Heart right ventricle (tissue), 16 donors: ENCODE measurements at regions of chr5 and their contacts with region 1.

Region 1: DNA sequence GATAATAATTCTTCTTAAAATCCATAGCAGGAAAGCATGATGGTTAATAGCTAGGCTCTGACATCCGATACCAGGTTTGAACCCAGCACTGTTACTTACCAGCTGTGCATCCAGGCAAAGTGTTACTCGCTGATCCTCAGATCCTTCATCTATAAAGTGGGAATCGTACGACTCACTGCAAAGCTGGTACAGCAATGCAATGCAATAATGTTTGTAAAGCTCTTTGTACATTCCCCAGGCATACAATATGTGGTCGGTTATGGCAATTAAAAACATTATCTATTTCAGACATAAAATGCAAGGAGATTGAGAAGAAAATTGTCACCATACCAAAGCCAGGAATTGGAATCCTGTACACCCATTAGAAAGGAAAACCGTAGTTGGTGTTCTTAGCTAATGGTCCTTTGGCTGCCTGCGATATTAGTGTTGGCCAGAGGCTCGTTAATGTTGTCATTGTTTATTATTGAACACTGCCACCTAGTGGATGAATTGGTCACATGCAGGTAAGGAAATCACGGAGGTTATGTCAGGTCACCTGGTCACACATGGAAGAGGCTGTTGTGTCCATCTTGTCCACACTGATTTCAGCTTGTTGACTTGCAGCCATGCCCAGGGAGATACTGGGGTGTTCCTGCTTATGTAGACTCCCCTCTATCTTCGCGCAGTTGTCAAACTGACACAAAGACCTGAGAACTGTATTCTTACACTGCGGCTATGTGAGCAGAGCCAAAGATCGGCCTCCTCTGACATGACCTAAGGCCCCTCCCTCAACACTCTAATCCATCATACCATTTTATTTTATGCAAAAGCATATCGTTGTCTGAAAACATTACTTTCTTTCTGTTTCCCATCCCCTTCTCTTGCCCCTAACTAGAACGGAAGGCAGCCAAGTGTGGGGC is 87.5 kb upstream of the PPP2R2B start:
- DNase-seq: peak in 1 of 2 donors; percentile 70
- ATAC-seq: peak; percentile 75 to 96 (median 90)
- H3K4me3 ChIP-seq: no peak overlapping the region
- H3K27ac ChIP-seq: no peak overlapping the region
- H3K4me1 ChIP-seq: no peaks in the 10 kb centered on the region
- H3K27me3 ChIP-seq: no peaks in the 10 kb centered on the region
- CTCF ChIP-seq: peak; percentile 71 to 93 (median 89)

Region 2: GRCh38 chr5:146533260-146533857 is 432.7 kb before region 1 on chr5:
- intact Hi-C with region 1: loop called in 1 of 10 experiments (anchors 1 kb)
- DNase-seq: peak; percentile 26 to 31
- ATAC-seq: peak in 3 of 8 donors; percentile 22 to 73 (median 51)
- H3K4me3 ChIP-seq: no peak overlapping the region
- H3K27ac ChIP-seq: no peak overlapping the region
- H3K4me1 ChIP-seq: no peaks in the 10 kb centered on the region
- H3K27me3 ChIP-seq: peaks cover 0 to 3% (median 0%) of the 10 kb centered on the region in 7 donors
- CTCF ChIP-seq: peak; percentile 51 to 82 (median 73)

Region 3: DNA sequence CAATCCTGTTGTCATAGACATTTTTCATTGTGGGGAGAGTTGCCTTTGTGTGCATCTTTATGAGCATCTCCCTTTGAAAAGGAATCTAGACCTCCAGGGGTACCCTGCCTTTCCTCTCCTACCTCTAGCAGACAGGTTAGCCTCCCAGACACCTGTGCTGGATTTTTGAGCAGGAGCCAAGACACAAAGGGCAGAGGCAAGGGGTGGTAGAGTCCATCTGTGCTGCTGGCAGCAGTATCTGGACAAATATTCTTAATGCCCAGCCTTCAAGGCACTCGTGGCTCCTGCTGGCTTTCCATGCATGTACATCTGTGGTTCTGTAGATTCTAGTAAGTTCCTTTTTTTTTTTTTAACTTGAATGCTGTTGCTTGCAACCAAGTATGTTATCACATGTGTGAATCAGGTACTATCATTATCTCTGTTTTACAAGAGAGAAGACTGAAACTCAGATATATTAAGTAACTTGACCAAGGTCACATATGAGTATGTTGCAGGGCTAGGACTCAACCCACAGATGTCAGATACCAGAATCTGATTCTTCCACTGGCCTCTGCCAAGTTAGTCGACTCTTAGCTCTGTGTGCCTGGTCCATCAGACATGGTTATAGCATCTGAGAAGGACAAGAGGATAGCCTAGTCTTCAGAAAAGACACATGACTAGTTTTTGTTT is 417.1 kb before region 1 on chr5:
- intact Hi-C with region 1: loop called in 6 of 10 experiments (anchors 5 kb)
- DNase-seq: no peak
- ATAC-seq: no peak
- H3K4me3 ChIP-seq: no peak overlapping the region
- H3K27ac ChIP-seq: no peak overlapping the region
- H3K4me1 ChIP-seq: no peaks in the 10 kb centered on the region
- H3K27me3 ChIP-seq: peaks cover 0 to 20% (median 0%) of the 10 kb centered on the region in 7 donors
- CTCF ChIP-seq: no peak

Region 4: DNA sequence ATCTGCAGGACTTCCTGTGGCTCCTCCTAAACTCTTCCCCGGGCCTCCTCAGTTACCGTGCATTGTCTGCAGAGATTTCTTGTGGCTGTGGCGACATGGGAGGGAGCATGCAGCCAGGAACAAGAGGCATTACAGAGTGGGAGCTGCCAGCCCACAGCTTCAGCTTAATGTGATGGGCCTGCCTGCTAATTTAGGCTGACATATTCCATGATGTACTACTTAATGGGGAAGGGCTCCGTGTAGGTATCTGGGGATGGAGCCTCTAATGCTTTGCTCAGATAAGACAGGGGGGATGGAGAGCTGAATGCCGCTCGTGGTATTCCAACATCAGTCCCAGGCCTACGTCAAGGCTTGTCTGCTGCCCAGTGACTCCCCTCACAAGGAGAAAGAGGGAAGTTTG is 312.4 kb before region 1 on chr5:
- intact Hi-C with region 1: loop called in 2 of 10 experiments (anchors 5 to 10 kb)
- DNase-seq: no peak
- ATAC-seq: no peak
- H3K4me3 ChIP-seq: no peak overlapping the region
- H3K27ac ChIP-seq: no peak overlapping the region
- H3K4me1 ChIP-seq: no peaks in the 10 kb centered on the region
- H3K27me3 ChIP-seq: no peaks in the 10 kb centered on the region
- CTCF ChIP-seq: no peak

Region 5: GRCh38 chr5:146680830-146681572 is 285.0 kb before region 1 on chr5:
- intact Hi-C with region 1: loop called in 1 of 10 experiments (anchors 10 kb)
- DNase-seq: no peak
- ATAC-seq: no peak
- H3K4me3 ChIP-seq: no peak overlapping the region
- H3K27ac ChIP-seq: no peak overlapping the region
- H3K4me1 ChIP-seq: no peaks in the 10 kb centered on the region
- H3K27me3 ChIP-seq: peaks cover 0 to 5% (median 0%) of the 10 kb centered on the region in 7 donors
- CTCF ChIP-seq: no peak